A673 (cell line): ENCODE measurements at regions of chr1 and their contacts with region 1.

Region 1: DNA sequence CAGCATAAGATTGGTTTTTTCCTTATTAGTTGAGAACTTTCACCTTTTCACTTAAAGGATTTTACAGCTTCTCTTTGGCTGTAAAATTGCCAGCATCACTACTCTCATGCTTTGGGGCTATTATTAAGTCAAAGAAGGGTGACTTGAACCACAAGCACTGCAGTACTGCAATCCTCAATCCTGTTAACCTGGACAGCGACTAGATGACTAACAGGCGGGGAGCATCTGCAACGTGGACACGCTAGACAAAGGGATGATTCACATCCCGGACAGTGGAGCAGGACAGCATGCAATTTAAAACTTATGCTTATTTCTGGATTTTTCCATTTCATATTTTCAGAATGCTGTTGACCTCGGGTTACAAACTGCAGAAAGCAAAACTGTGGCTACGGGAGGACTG is 8.1 kb downstream of the ARV1 start:
- DNase-seq: no peak
- H3K4me3 ChIP-seq: no peak overlapping the region
- H3K27ac ChIP-seq: no peak overlapping the region
- H3K4me1 ChIP-seq: peaks cover 9% of the 10 kb centered on the region
- H3K27me3 ChIP-seq: no peaks in the 10 kb centered on the region
- CTCF ChIP-seq: no peak

Region 2: DNA sequence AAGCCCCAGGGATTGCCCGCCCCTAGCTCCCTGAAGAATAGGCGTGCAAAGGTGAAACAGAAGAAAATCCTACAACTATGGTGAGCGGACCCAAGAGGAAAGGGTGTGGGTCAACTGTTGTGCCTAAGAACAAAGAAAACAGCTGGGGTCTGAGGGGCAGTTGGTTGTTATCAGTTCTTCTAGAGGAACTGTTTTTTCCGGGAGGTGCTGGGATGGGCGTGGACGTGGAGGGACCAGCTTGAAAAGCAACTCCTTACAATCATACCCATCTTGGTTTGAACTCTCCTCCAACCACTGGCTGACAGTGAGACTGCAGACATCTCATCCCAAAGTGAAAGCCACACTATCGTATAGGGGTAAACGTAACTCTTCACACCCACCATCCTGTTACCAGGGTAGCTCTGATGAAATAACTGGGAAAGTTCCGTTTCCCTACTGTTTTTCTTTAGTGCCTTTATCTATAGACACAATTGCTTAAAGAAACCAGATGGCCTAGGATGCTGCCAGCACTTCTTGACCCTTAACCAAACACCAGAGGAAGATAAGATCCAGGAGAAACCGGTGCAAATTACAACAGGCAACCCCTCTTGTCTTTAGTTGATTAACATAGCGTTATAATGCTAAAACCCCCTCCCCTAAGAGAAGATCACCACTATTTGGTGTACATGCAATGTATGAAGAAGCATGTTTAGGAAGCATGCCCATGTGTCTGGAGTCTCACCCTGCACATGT is 78.7 kb after region 1 on chr1:
- CTCF ChIA-PET with region 1: no interaction called
- POLR2A ChIA-PET with region 1: no interaction called
- intact Hi-C with region 1: loop called (anchors 2 kb)
- DNase-seq: no peak
- H3K4me3 ChIP-seq: no peak overlapping the region
- H3K27ac ChIP-seq: no peak overlapping the region
- H3K4me1 ChIP-seq: no peaks in the 10 kb centered on the region
- H3K27me3 ChIP-seq: no peaks in the 10 kb centered on the region
- CTCF ChIP-seq: no peak